ENCODE measurements at regions of chr14 and their contacts with region 1.

Region 1: GRCh38 chr14:51283402-51284085 is 43.5 kb downstream of the TMX1 start:
- DNase-seq: peak; percentile 77
- H3K4me3 ChIP-seq: no peak overlapping the region
- H3K27me3 ChIP-seq: no peaks in the 10 kb centered on the region
- CTCF ChIP-seq: peak; percentile 67

Region 2: DNA sequence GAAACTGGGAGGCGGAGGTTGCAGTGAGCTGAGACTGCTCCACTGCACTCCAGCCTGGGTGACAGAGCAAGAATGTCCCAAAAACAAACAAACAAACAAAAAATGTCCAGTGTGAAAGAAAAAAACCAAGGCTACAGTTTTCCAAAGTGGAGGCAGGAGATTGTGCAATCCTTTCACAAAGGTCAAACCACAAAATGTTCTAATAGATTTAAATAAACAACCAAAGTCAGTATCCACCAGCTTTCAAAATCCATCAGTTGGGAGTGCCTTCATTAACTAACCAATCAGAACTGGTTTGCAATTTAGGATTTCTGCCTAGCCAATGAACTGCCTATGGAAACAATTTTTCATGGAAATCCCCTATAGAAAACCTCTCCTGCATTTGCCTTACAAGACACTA is 136.4 kb before region 1 on chr14:
- CTCF ChIA-PET with region 1: no interaction called
- POLR2A ChIA-PET with region 1: no interaction called
- DNase-seq: no peak
- H3K4me3 ChIP-seq: no peak overlapping the region
- H3K27me3 ChIP-seq: 0 out of 2 replicates have a peak, but pooled peaks cover 1% of the 10 kb centered on the region
- CTCF ChIP-seq: no peak

Region 3: DNA sequence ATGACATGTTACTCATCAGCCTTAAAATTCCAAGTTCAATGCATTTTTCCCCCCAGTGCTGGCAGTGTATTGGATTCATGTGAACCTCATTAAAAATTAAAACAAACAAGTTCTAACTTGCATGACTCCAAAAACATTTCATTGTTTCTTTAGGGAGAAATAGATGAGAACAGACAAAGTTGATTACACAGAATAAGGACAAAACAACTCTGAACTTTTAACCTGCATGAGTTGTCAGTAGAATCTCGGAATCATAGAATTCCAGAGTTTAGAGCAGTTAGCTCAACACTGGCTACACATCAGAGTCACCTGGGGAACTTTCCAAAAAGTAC is 84.0 kb after region 1 on chr14:
- CTCF ChIA-PET with region 1: interaction called, 12 read pairs
- POLR2A ChIA-PET with region 1: no interaction called
- DNase-seq: peak; percentile 94
- H3K4me3 ChIP-seq: no peak overlapping the region
- H3K27me3 ChIP-seq: no peaks in the 10 kb centered on the region
- CTCF ChIP-seq: no peak

Region 4: GRCh38 chr14:51430633-51431032 is 147.1 kb after region 1 on chr14:
- CTCF ChIA-PET with region 1: no interaction called
- POLR2A ChIA-PET with region 1: no interaction called
- DNase-seq: no peak
- H3K4me3 ChIP-seq: no peak overlapping the region
- H3K27me3 ChIP-seq: no peaks in the 10 kb centered on the region
- CTCF ChIP-seq: no peak

Region 5: GRCh38 chr14:52325126-52325525 is 1041.6 kb after region 1 on chr14:
- CTCF ChIA-PET with region 1: no interaction called
- POLR2A ChIA-PET with region 1: no interaction called
- DNase-seq: no peak
- H3K4me3 ChIP-seq: no peak overlapping the region
- H3K27me3 ChIP-seq: no peaks in the 10 kb centered on the region; the same call in 1 of the 2 replicates
- CTCF ChIP-seq: no peak